Panc1 (cell line): ENCODE measurements at regions of chr16 and their contacts with region 1.

Region 1: GRCh38 chr16:19184823-19185509 is 16.9 kb downstream of the SYT17 start:
- DNase-seq: no peak
- ATAC-seq: no peak
- H3K4me3 ChIP-seq: no peak overlapping the region
- H3K27ac ChIP-seq: no peak overlapping the region
- H3K4me1 ChIP-seq: no peaks in the 10 kb centered on the region
- H3K27me3 ChIP-seq: no peaks in the 10 kb centered on the region
- CTCF ChIP-seq: no peak

Region 2: GRCh38 chr16:19073344-19073743 is 111.6 kb before region 1 on chr16:
- CTCF ChIA-PET with region 1: interaction called, 10 read pairs
- POLR2A ChIA-PET with region 1: no interaction called
- in situ Hi-C with region 1: no loop called
- intact Hi-C with region 1: no loop called
- DNase-seq: no peak
- ATAC-seq: no peak
- H3K4me3 ChIP-seq: no peak overlapping the region
- H3K27ac ChIP-seq: no peak overlapping the region
- H3K4me1 ChIP-seq: no peaks in the 10 kb centered on the region
- H3K27me3 ChIP-seq: no peaks in the 10 kb centered on the region
- CTCF ChIP-seq: no peak

Region 3: DNA sequence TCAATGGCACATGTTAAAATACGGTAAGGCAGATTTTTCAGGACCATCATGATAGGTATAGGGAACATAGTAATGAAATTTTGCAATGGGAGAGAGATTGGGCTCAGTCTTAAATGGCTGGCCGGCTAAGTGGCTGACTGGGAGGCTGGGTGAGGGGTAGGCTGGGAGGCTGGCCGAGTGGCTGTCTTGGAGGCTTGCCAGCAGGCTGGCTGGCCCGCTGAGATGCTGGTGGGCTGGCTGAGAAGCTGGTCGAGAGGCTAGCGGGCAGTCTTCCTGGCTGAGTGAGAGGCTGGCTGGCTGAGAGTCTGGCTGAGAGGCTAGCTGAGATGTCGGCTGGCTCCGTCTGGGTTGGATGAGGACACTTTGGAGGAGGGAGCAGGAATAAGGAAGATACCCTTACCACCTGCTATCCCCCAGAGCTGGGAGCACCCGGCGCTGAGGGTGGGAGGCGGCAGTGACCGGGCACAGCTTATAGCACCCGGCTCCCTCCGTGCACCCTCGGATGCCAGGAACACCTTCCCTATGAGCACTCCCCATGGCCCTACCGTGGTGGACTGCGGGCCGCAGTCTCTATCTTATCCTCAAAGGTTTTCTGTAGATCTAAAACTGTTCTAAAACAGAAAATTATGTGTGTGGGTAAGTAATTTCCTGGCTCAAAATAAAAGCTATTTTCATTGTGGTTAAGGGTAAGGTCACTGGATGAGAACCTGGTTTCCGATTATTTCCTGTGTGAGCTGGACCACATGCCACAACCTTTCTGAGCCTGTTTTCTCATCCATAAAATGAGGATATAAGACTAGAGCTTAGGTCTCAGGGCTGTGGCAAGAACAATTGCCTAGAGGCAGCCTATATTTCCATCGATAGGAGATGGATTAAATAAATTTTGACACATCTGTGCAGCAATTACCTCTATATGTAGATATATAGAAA is 198.2 kb after region 1 on chr16:
- CTCF ChIA-PET with region 1: no interaction called
- POLR2A ChIA-PET with region 1: no interaction called
- in situ Hi-C with region 1: no loop called
- intact Hi-C with region 1: no loop called
- DNase-seq: no peak
- ATAC-seq: no peak
- H3K4me3 ChIP-seq: no peak overlapping the region
- H3K27ac ChIP-seq: no peak overlapping the region
- H3K4me1 ChIP-seq: no peaks in the 10 kb centered on the region; the same call in 1 of the 2 replicates
- H3K27me3 ChIP-seq: 0 out of 2 replicates have a peak, but pooled peaks cover 4% of the 10 kb centered on the region
- CTCF ChIP-seq: no peak